ENCODE measurements at regions of chr4 and their contacts with region 1.

Region 1: DNA sequence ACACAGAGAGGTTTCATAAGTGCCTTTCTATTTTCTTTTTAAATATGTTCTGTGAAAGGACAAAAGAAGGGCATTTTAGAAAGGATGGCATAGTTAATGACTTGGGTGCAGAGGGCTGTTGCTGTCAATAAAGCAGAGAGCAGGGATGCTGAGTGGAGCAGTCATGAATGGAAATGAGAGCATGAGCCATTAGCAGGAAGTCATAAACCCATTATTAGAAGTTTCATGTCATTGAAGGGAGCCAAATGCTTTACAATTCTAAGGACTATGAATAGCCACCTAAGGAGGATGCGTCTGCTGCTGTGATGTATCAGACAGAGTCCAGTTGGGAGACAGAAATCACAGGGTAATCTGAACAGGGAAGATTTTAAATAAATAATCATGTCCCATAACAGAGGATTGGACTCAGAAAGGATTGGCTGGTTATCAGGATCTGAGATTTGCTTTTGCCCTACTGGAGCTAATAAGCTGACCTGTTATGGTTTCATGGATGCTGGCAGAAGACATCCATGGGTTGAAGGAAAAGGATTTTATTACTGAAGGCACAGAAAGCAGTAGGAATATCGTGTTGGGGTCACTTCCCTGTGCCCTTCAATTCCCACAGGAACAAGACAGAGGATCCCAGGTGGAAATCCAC is 47.5 kb upstream of the WDR19 start:
- DNase-seq: no peak
- ATAC-seq: peak in 3 of 4 donors; percentile 54 to 62 (median 57)
- H3K4me3 ChIP-seq: peak overlapping the region; percentile 23
- H3K27ac ChIP-seq: no peak overlapping the region
- H3K4me1 ChIP-seq: no peaks in the 10 kb centered on the region
- H3K27me3 ChIP-seq: no peaks in the 10 kb centered on the region
- CTCF ChIP-seq: no peak

Region 2: GRCh38 chr4:38759113-38759789 is 375.6 kb before region 1 on chr4:
- intact Hi-C with region 1: loop called in 1 of 2 experiments (anchors 5 kb)
- DNase-seq: peak in 1 of 2 donors; percentile 19
- ATAC-seq: peak in 3 of 4 donors; percentile 28 to 78 (median 73)
- H3K4me3 ChIP-seq: no peak overlapping the region
- H3K27ac ChIP-seq: no peak overlapping the region
- H3K4me1 ChIP-seq: peaks cover 3% of the 10 kb centered on the region
- H3K27me3 ChIP-seq: no peaks in the 10 kb centered on the region
- CTCF ChIP-seq: peak; percentile 71

Region 3: DNA sequence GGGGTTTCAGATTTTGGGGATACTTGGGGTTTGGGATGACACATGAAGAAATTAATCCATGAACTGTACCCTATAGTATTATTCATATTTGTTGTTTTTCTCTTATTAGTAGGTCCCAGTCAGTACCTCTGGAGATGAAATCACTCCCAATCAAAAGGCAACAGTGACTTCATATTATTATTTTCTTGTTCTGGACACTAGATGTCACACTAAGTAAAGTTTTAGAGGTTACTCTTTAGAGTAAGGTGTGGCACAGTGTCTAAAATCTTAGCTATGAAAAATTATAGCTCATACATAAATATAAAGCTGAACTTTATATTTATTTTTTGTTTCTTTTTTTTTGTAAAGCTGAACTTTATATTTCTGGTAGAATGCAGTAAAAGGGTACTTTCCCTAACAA is 232.1 kb before region 1 on chr4:
- intact Hi-C with region 1: loop called (anchors 1 to 5 kb)
- DNase-seq: no peak
- ATAC-seq: peak in 3 of 4 donors; percentile 60 to 85 (median 69)
- H3K4me3 ChIP-seq: no peak overlapping the region
- H3K27ac ChIP-seq: no peak overlapping the region
- H3K4me1 ChIP-seq: no peaks in the 10 kb centered on the region
- H3K27me3 ChIP-seq: no peaks in the 10 kb centered on the region
- CTCF ChIP-seq: peak; percentile 50

Measured in psoas muscle (tissue), 8 donors.